GM10248 (cell line): ENCODE measurements at regions of chr6 and their contacts with region 1.

Region 1: GRCh38 chr6:38570750-38571149 is 69.0 kb downstream of the BTBD9 start:
- DNase-seq: no peak
- CTCF ChIP-seq: peak; percentile 48

Region 2: DNA sequence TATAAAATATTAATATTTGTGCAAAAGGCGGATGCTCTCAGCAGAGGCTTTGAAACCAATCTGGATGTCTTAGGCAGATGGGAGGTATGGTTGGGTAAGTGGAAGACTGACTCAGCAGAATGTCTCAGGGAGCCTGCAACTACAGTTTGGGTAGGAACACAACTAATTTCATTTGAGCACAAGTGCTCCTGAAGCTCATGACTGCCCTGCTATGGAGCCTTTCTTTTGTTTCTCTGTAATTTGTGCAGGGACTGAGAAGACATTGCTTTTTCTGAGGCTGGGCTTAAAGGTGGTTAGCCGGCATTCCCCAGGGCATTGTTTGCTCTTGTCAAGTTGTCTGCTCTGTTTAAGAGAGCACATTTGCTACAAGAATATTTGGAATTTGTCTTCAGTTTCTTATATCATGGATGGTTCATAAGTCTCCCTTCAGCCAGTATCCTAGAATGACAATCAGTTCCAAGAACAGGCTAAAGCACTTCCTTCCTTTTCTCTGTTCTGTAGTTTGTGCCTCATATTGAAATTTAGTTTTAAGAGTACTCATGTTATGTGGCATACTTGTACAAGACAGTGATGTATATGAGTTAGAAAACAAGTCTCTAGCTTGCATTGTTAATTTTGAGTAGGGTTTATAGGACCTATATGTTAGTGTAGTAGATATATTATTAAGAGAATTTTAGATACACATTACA is 542.9 kb before region 1 on chr6:
- CTCF ChIA-PET with region 1: no interaction called
- POLR2A ChIA-PET with region 1: no interaction called
- DNase-seq: no peak
- CTCF ChIP-seq: no peak

Region 3: GRCh38 chr6:38483526-38483925 is 87.2 kb before region 1 on chr6:
- CTCF ChIA-PET with region 1: no interaction called
- POLR2A ChIA-PET with region 1: interaction called, 13 read pairs
- DNase-seq: peak; percentile 49
- CTCF ChIP-seq: no peak

Region 4: DNA sequence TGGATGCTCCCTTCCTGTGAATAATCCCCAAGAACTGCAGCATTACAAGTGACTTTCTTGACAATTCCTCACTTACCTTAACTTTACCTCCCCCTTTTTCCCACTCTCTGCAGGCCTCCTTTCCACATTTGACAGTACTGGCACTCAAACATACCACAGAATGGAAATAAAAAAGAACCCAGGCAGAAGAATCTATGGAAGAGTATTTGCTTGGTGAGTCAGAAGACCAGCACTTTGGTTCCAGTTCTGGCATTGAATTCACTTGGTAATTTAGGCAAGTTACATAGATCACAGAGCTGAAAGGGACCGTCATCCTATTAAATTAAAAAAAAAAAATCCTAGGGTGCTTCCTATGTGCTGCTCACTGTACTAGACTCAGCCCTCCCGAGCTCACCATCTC is 14.0 kb after region 1 on chr6:
- CTCF ChIA-PET with region 1: interaction called, 18 read pairs
- POLR2A ChIA-PET with region 1: no interaction called
- DNase-seq: no peak
- CTCF ChIP-seq: no peak